Body of pancreas (tissue), 4 donors: ENCODE measurements at regions of chr11 and their contacts with region 1.

Region 1: GRCh38 chr11:46889689-46890475 is 28.5 kb downstream of the LRP4 start:
- DNase-seq: peak; percentile 79 to 85 (median 83)
- ATAC-seq: peak; percentile 94
- H3K4me3 ChIP-seq: no peak overlapping the region
- H3K27ac ChIP-seq: no peak overlapping the region
- H3K4me1 ChIP-seq: no peaks in the 10 kb centered on the region
- H3K27me3 ChIP-seq: no peaks in the 10 kb centered on the region
- CTCF ChIP-seq: peak; percentile 76 to 96 (median 94)
- POLR2A ChIP-seq: no peak

Region 2: GRCh38 chr11:47154616-47155570 is 265.0 kb after region 1 on chr11:
- intact Hi-C with region 1: loop called (anchors 2 kb)
- DNase-seq: no peak
- ATAC-seq: no peak
- H3K4me3 ChIP-seq: no peak overlapping the region
- H3K27ac ChIP-seq: no peak overlapping the region
- H3K4me1 ChIP-seq: peaks cover 28% of the 10 kb centered on the region
- H3K27me3 ChIP-seq: no peaks in the 10 kb centered on the region
- CTCF ChIP-seq: no peak
- POLR2A ChIP-seq: no peak

Region 3: DNA sequence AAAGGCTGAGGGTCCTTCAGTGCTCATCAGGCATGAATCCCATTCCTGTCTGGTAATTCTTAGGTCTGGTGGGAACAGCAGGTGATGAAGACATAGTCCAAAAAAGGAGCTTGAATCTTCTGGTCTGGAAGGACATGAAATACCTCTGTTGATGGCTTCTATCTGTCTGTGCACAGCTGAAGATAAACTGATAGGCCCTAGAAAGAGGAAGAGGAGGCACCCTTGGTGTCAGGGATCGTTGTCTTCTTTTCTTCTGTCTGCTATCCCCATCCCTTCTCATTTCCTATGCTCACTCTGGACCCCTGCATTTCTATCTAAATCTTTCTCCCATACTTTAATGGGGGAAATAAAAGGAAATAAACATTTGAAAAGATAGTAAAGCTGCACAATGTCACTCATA is 815.8 kb after region 1 on chr11:
- intact Hi-C with region 1: no loop called
- DNase-seq: no peak
- ATAC-seq: no peak
- H3K4me3 ChIP-seq: no peak overlapping the region
- H3K27ac ChIP-seq: no peak overlapping the region
- H3K4me1 ChIP-seq: no peaks in the 10 kb centered on the region
- H3K27me3 ChIP-seq: no peaks in the 10 kb centered on the region
- CTCF ChIP-seq: no peak
- POLR2A ChIP-seq: no peak